Tibial artery (tissue), 4 donors: ENCODE measurements at regions of chr19 and their contacts with region 1.

Region 1: DNA sequence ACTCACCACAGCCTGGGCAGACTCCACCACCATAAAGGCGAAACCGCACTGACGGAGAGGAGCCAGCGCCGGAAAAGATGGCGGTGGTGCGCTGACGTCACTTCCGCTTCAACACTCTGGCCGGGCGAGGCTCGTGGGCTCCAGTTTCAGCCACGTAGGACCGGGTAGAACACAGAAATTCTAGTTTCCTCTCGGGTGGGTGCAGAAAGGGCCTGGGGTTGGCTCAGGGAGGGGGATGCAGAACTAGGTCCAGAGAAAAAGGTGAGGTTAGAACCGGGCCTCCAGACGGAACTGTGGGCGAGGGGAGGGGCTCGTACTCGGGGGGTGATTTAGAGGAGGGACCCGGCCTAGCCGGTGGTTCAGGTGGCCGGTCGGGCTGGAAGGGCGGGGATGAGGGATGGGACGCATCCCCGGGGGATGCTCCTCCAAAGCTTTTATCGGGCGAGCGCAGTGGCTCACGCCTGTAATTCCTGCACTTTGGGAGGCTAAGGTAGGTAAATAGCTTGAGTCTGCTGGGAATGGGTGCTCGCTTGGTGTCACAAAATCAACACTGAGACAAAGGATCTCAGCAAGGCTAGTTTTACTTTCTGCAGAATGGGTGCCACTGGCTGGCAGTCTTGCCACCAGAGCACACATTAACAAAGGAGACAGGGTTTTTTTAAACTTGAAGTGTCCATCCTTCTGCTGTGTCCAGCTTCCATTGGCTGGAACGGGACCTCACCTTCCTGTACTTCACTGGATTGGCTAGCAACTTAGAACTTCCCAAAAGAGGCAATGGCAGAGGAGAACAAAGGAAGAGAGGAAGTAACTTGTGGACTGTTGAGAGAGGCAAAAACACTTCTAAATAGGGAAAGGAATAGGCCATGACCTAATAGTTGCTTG is at the start of gene ZNF561:
- DNase-seq: peak; percentile 79 to 91
- H3K4me3 ChIP-seq: peak within 1 kb of the TSS; percentile 57 to 73
- H3K27ac ChIP-seq: peak within 1 kb of the TSS; percentile 74 to 75
- H3K4me1 ChIP-seq: peaks cover 0 to 34% (median 16%) of the 10 kb centered on the region in 4 donors
- H3K27me3 ChIP-seq: no peaks in the 10 kb centered on the region
- CTCF ChIP-seq: no peak

Region 2: GRCh38 chr19:9309974-9310446 is 311.4 kb before region 1 on chr19:
- intact Hi-C with region 1: loop called (anchors 5 kb)
- DNase-seq: peak; percentile 91 to 95
- H3K4me3 ChIP-seq: peak overlapping the region; percentile 69 to 72
- H3K27ac ChIP-seq: peak overlapping the region; percentile 89 to 90
- H3K4me1 ChIP-seq: peaks cover 0 to 22% (median 8%) of the 10 kb centered on the region in 4 donors
- H3K27me3 ChIP-seq: no peaks in the 10 kb centered on the region
- CTCF ChIP-seq: no peak

Region 3: DNA sequence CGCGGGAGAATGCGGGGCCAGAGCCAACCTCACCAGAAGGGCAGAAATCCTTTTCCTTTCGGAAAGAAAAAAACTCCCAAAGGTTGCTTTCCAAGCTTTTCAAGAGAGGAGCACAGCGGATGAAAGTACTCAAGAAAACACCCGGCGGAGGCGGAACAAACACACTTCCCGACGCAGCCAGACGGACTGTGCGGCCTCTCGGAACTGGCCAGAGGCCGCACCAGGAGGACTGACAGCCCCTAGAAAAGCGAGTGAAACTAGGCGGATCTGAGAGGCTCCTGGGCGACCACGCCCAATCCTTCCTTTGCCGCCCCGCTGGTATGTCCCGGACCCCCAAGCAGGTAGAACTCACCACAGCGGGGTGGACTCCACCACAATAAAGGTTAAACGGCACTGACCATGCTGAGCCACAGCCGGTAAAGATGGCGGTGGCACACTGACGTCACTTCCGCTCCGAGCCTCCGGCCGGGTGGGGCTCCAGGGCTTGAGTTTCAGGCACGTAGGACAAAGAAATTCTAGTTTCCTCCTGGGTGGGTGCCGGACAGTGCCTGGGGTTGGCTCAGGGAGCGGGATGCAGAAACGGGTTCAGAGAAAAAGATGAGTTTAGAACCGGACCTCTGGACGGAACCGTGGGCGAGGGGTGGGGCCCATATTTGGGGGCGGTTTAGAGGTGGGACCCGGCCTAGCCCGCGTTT is 53.4 kb after region 1 on chr19 and contains the start of gene ZNF562:
- intact Hi-C with region 1: loop called (anchors 10 kb)
- DNase-seq: peak; percentile 76 to 89
- H3K4me3 ChIP-seq: peak within 1 kb of the TSS; percentile 71 to 86
- H3K27ac ChIP-seq: peak within 1 kb of the TSS; percentile 91 to 93
- H3K4me1 ChIP-seq: no peaks in the 10 kb centered on the region
- H3K27me3 ChIP-seq: no peaks in the 10 kb centered on the region
- CTCF ChIP-seq: no peak

Region 4: DNA sequence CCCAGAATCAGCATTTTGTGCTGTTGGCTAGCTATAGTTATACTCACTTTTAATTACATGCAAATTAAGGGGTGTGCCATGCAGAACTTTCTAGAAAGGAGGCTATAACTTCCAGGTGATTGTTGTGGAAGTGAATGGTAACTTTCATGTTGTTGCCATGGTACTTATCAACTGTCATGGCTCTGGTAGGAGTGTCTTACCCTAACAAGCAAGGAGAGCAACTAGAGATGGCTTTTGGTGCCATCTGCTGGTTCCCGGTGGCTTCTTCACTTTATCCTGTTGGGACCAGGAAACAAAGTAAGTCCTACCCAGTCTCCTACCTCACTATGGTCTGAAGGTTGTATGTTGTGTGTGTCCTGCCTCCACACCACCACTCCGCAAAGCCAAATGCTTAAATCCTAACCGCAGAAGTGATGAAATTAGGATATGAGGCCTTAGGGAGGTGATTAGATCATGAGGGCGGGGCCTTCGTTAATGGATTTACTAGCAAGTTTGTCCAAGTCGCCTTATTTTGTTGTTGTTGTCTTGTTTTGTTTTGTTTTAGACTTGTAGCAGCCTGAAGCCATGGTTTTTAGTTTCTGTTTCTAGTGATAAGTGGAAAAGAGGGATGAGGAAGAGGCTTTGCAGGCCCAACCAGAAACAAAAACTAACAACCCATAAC is 174.8 kb after region 1 on chr19:
- intact Hi-C with region 1: loop called (anchors 2 kb)
- DNase-seq: peak; percentile 87 to 90
- H3K4me3 ChIP-seq: no peak overlapping the region
- H3K27ac ChIP-seq: no peak overlapping the region
- H3K4me1 ChIP-seq: peaks cover 0 to 8% (median under 1%) of the 10 kb centered on the region in 4 donors
- H3K27me3 ChIP-seq: no peaks in the 10 kb centered on the region
- CTCF ChIP-seq: peak; percentile 76 to 83

Region 5: DNA sequence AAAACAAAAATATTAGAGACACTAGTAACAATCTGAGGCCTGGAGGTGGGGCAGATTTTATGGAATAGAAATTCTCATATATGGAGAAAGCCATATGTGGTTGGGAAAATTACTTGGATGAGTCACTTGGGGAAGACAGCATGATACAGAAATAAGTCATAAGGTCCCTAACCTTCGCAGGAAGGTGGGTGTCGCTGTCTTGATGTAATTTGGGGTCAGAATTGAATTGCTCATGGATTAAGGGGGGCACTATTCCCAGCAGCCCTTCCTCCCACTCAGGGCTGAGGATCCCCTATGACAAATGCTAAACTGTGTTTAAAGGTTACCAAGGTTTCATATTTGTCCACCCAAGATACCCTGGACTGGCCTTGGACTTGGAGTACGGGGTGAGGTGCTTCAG is 396.9 kb after region 1 on chr19:
- intact Hi-C with region 1: no loop called
- DNase-seq: no peak
- H3K4me3 ChIP-seq: no peak overlapping the region
- H3K27ac ChIP-seq: no peak overlapping the region
- H3K4me1 ChIP-seq: no peaks in the 10 kb centered on the region
- H3K27me3 ChIP-seq: peaks cover 0 to 50% of the 10 kb centered on the region in 2 donors
- CTCF ChIP-seq: no peak